Left ventricle myocardium superior (tissue), 1 donor: ENCODE measurements at regions of chr14 and their contacts with region 1.

Region 1: GRCh38 chr14:60553808-60554207 is 44.9 kb downstream of the SIX6 start:
- DNase-seq: no peak
- ATAC-seq: no peak

Region 2: DNA sequence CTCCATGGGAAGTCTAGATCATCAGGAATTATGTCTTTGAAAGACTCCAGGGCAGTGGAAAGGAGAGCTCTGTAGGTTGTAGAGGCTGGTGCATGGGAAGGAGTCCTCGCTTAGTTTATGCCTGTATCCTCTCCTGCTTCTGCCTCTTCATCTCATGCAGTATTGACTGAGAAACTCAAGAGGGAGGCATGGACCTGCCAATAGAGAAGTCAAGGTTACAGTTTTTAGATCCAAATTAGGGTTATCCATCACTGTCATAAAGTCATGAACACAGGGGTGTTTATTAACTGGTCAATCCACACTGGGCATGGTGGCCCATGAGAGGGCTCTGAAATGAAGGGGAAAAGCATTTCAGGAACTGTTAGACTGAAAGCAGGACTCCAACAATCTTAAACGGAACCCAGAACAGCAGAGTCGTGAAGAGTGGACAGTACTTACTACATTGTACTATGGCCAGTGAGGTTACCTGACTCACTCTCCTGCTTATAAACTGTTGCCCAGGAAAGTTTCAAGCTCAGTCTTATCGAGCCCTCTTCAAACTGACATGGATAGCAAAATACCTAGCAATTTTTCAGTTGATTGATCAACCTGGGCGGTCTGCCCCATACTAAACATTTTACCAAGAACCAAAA is 358.5 kb before region 1 on chr14:
- intact Hi-C with region 1: loop called (anchors 10 kb)
- DNase-seq: no peak
- ATAC-seq: peak; percentile 71